K562 (cell line): ENCODE measurements at regions of chr15 and their contacts with region 1.

Region 1: GRCh38 chr15:55654561-55655031 is 66.5 kb upstream of the PYGO1 start:
- DNase-seq: no peak
- ATAC-seq: no peak
- H3K4me3 ChIP-seq: no peak overlapping the region
- H3K27ac ChIP-seq: no peak overlapping the region
- H3K4me1 ChIP-seq: no peaks in the 10 kb centered on the region
- H3K27me3 ChIP-seq: peaks cover 0 to 6% of the 10 kb centered on the region in 2 experiments; a peak in 2 of 5 replicates
- CTCF ChIP-seq: no peak
- EP300 ChIP-seq: no peak
- POLR2A ChIP-seq: no peak
- RAD21 ChIP-seq: no peak

Region 2: GRCh38 chr15:55685286-55685685 is 30.7 kb after region 1 on chr15:
- CTCF ChIA-PET with region 1: no interaction called
- POLR2A ChIA-PET with region 1: no interaction called
- in situ Hi-C with region 1: no loop called
- intact Hi-C with region 1: no loop called
- DNase-seq: no peak
- ATAC-seq: no peak
- H3K4me3 ChIP-seq: no peak overlapping the region
- H3K27ac ChIP-seq: no peak overlapping the region
- H3K4me1 ChIP-seq: no peaks in the 10 kb centered on the region
- H3K27me3 ChIP-seq: peaks cover 0 to 9% of the 10 kb centered on the region in 2 experiments; a peak in 2 of 5 replicates
- CTCF ChIP-seq: no peak
- EP300 ChIP-seq: no peak
- POLR2A ChIP-seq: no peak
- RAD21 ChIP-seq: no peak

Region 3: GRCh38 chr15:55917881-55918296 is 263.3 kb after region 1 on chr15:
- CTCF ChIA-PET with region 1: no interaction called
- POLR2A ChIA-PET with region 1: no interaction called
- in situ Hi-C with region 1: no loop called
- intact Hi-C with region 1: loop called (anchors 10 kb)
- DNase-seq: peak; percentile 6 to 28 (median 10)
- ATAC-seq: peak; percentile 47; the same call in 2 of the 3 replicates
- H3K4me3 ChIP-seq: no peak overlapping the region
- H3K27ac ChIP-seq: no peak overlapping the region
- H3K4me1 ChIP-seq: no peaks in the 10 kb centered on the region
- H3K27me3 ChIP-seq: no peaks in the 10 kb centered on the region
- CTCF ChIP-seq: peak; percentile 32 to 57 (median 49); a peak in 4 of 6 replicates
- EP300 ChIP-seq: no peak
- POLR2A ChIP-seq: no peak
- RAD21 ChIP-seq: 0 out of 4 replicates have a peak, but pooled peaks of 1 of the 2 experiments have one; percentile 6

Region 4: DNA sequence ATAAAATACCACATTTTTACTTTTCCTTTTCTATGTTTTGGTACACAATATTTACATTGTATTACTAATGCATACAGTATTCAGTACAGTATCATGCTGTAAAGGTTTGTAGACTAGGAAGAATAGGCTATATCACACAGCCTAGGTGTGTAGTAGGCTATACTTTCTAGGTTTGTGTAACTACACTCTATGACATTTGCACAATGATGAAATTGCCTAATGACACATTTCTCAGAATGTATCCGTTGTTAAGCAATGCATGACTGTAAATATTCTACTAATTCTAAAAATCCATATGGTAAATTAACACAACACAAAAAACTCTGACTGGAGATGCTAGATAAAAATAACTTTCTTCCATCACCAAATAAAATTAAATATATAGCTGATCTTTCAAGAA is 322.6 kb after region 1 on chr15:
- CTCF ChIA-PET with region 1: no interaction called
- POLR2A ChIA-PET with region 1: no interaction called
- in situ Hi-C with region 1: no loop called
- intact Hi-C with region 1: no loop called
- DNase-seq: no peak
- ATAC-seq: no peak
- H3K4me3 ChIP-seq: no peak overlapping the region
- H3K27ac ChIP-seq: no peak overlapping the region
- H3K4me1 ChIP-seq: no peaks in the 10 kb centered on the region
- H3K27me3 ChIP-seq: no peaks in the 10 kb centered on the region
- CTCF ChIP-seq: no peak
- EP300 ChIP-seq: no peak
- POLR2A ChIP-seq: no peak
- RAD21 ChIP-seq: no peak

Region 5: GRCh38 chr15:56052395-56053045 is 397.9 kb after region 1 on chr15:
- CTCF ChIA-PET with region 1: no interaction called
- POLR2A ChIA-PET with region 1: no interaction called
- in situ Hi-C with region 1: no loop called
- intact Hi-C with region 1: loop called (anchors 10 kb)
- DNase-seq: peak; percentile 19 to 31 (median 24)
- ATAC-seq: peak; percentile 69
- H3K4me3 ChIP-seq: no peak overlapping the region
- H3K27ac ChIP-seq: no peak overlapping the region
- H3K4me1 ChIP-seq: peaks cover 0 to 6% of the 10 kb centered on the region in 2 experiments; a peak in 2 of 5 replicates
- H3K27me3 ChIP-seq: no peaks in the 10 kb centered on the region
- CTCF ChIP-seq: peak; percentile 51 to 70 (median 55); a peak in 5 of 6 replicates
- EP300 ChIP-seq: no peak
- POLR2A ChIP-seq: no peak
- RAD21 ChIP-seq: peak; percentile 37 to 79; a peak in 3 of 4 replicates